ENCODE measurements at regions of chrX and their contacts with region 1.

Region 1: GRCh38 chrX:129637217-129638109 is 17.3 kb downstream of the APLN start:
- H3K4me3 ChIP-seq: no peak overlapping the region
- H3K27ac ChIP-seq: no peak overlapping the region
- H3K4me1 ChIP-seq: no peaks in the 10 kb centered on the region
- CTCF ChIP-seq: peak; percentile 71

Region 2: DNA sequence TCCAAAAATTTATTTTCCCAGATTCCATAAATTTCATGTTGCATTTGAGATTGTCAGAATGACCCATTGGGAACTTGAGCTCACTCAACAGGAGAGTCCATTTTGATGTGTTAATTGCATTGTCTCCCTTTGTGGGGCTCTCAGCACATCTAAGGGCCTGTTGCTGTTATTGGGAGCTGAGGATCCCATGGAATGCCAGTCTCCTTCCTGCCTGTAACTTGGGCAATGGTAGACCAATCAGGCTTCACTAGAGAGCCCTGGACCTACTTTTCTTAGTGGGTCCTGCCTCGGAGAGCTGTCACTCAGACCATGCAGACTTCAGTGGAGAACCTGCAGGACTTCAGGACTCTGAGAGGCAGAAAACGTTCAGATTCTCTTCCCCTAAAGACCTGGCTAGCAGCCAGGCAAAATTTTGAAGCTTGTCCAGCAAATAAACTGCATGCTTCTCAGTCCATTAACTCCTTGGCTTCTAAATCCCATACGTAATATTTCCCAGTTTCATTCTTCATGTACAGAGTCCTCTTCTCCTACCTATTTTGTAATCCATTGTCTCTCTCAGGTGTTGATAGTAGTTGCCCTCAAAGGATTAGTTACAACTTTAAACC is 72.3 kb before region 1 on chrX:
- CTCF ChIA-PET with region 1: no interaction called
- POLR2A ChIA-PET with region 1: no interaction called
- H3K4me3 ChIP-seq: no peak overlapping the region
- H3K27ac ChIP-seq: no peak overlapping the region
- H3K4me1 ChIP-seq: no peaks in the 10 kb centered on the region
- CTCF ChIP-seq: no peak

Region 3: DNA sequence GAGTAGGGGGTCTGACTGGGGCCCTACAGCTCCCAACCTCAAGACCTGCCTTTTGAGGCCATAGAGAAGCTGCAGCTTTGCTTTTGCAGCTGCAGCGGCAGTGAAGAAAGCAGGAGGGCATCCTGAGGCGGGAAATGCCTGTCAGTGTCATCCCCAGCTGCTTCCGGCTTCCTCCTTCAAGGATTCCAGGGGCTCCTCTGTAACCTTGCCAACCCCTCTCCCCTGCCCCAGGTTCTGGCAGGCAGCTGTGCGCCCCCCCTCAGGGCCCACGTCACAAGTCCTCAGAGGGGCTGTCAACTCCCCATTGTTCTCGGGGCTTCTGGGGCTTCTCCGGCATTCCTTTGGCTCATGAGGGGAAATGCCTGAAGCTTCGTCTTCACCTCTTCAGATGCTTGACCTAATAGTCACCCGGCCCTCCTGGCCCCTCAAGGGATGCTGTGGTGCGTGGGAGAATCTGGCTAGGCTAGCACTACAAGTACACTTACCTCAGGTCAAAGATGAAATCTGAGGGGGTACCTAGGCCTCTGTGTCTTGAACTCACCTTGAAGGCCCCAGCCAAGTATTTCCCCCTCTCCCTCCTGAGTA is 14.6 kb before region 1 on chrX:
- CTCF ChIA-PET with region 1: interaction called, 16 read pairs
- POLR2A ChIA-PET with region 1: no interaction called
- H3K4me3 ChIP-seq: no peak overlapping the region
- H3K27ac ChIP-seq: no peak overlapping the region
- H3K4me1 ChIP-seq: no peaks in the 10 kb centered on the region
- CTCF ChIP-seq: no peak

Region 4: DNA sequence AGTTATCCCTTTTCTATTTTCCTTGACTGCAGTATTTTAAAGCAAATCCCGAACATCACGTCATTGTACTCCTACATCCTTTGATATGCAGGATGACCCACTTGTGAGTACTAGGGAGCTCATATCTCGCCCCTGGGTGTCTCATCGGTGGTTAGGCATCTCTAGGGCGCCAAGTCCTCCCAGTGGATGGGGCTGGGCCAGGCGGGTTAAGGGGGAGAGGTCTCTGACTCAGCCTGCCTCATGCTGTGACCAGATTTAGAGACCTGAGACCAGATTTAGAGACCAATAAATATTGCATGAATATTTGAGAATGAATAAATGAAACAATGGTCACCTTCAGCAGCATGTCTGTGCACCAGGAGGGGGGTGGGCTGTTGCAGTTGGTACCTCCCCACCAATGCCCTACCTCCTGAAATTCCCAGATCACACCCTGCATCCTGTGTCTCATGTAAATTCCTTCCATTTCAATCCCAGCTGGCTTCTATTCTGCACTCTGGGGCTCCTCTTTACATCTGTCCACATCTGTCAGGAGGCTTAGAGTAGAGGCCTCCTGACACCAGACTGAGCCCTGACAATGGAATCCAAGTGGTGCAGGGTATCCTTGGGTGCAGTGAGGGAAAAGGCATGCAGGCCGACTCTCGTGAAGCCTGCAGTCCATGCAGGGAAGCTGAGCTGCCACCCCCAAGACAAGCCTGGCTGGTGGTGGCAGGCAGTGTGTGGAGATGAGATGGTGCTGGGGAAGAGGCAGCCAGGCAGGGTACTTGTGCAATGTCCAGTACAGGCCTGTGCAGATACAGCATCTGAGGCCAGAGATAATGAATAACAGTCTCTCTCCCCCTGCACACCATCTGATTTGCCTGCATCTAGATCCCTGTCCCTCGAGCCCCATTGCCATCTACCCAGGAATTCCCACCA is 12.1 kb after region 1 on chrX:
- CTCF ChIA-PET with region 1: interaction called, 11 read pairs
- POLR2A ChIA-PET with region 1: interaction called, 4 read pairs
- H3K4me3 ChIP-seq: no peak overlapping the region
- H3K27ac ChIP-seq: no peak overlapping the region
- H3K4me1 ChIP-seq: no peaks in the 10 kb centered on the region; the same call in 1 of the 2 replicates
- CTCF ChIP-seq: no peak

Region 5: GRCh38 chrX:129737916-129738315 is 100.5 kb after region 1 on chrX:
- CTCF ChIA-PET with region 1: no interaction called
- POLR2A ChIA-PET with region 1: no interaction called
- H3K4me3 ChIP-seq: no peak overlapping the region
- H3K27ac ChIP-seq: no peak overlapping the region
- H3K4me1 ChIP-seq: no peaks in the 10 kb centered on the region
- CTCF ChIP-seq: no peak

Region 6: GRCh38 chrX:130245441-130245840 is 608.0 kb after region 1 on chrX:
- CTCF ChIA-PET with region 1: no interaction called
- POLR2A ChIA-PET with region 1: no interaction called
- H3K4me3 ChIP-seq: no peak overlapping the region
- H3K27ac ChIP-seq: no peak overlapping the region
- H3K4me1 ChIP-seq: no peaks in the 10 kb centered on the region
- CTCF ChIP-seq: no peak

Measured in HEK293 (cell line).